ENCODE measurements at regions of chrX and their contacts with region 1.

Region 1: DNA sequence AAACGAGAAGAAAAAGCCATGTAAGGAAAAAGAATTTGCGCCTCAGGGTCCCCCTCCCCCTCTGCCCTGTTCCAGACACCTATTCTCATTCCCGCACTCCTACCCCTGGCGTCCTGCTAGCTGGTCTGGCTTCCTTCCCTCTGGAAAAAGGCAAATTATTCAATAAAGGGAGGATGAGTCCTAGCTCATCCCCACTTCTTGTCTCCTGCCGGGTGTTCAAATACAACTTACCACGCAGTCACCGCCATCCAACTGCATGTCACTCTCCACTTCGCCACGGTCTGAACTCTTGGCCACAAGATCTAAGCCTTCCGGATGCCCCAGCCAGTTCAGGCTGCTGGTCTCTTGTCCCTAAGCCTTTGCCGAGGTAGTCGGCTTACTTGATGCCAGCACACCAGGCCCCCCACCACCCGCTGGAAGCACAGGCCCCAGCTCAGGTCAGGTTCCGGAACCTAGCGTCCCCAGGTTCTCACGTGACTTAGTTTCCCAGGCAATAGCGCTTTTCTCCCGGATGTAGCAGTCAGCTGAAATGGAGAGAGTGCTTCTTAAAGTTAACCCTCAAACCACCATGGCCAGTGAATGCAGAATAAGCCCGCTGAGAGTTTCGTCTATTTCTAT is 209.6 kb upstream of the SPIN4 start:
- DNase-seq: peak; percentile 63
- ATAC-seq: peak; percentile 68
- H3K4me3 ChIP-seq: peak overlapping the region; percentile 62 to 77 (median 63)
- H3K4me3 Mint-ChIP-seq: peak overlapping the region; percentile 99
- H3K27ac ChIP-seq: peak overlapping the region; percentile 38 to 75
- H3K27ac Mint-ChIP-seq: peak overlapping the region; percentile 91
- H3K4me1 ChIP-seq: peaks cover 6 to 8% of the 10 kb centered on the region in 2 donors
- H3K4me1 Mint-ChIP-seq: peaks cover 29% of the 10 kb centered on the region
- H3K27me3 ChIP-seq: peaks cover 0 to under 1% (median 0%) of the 10 kb centered on the region in 4 experiments
- H3K27me3 Mint-ChIP-seq: no peaks in the 10 kb centered on the region
- CTCF ChIP-seq: no peak

Region 2: GRCh38 chrX:63754860-63755582 is 194.3 kb after region 1 on chrX:
- CTCF ChIA-PET with region 1: no interaction called
- POLR2A ChIA-PET with region 1: no interaction called
- intact Hi-C with region 1: loop called (anchors 10 kb)
- DNase-seq: peak; percentile 89
- ATAC-seq: peak; percentile 98
- H3K4me3 ChIP-seq: peak overlapping the region; percentile 65 to 86 (median 75)
- H3K4me3 Mint-ChIP-seq: peak overlapping the region; percentile 100
- H3K27ac ChIP-seq: peak overlapping the region; percentile 79 to 80
- H3K27ac Mint-ChIP-seq: peak overlapping the region; percentile 97
- H3K4me1 ChIP-seq: peaks cover 4 to 14% of the 10 kb centered on the region in 2 donors
- H3K4me1 Mint-ChIP-seq: peaks cover 27% of the 10 kb centered on the region
- H3K27me3 ChIP-seq: no peaks in the 10 kb centered on the region
- H3K27me3 Mint-ChIP-seq: no peaks in the 10 kb centered on the region
- CTCF ChIP-seq: no peak

Measured in B cell (primary cell).